ENCODE measurements at regions of chr14 and their contacts with region 1.

Region 1: DNA sequence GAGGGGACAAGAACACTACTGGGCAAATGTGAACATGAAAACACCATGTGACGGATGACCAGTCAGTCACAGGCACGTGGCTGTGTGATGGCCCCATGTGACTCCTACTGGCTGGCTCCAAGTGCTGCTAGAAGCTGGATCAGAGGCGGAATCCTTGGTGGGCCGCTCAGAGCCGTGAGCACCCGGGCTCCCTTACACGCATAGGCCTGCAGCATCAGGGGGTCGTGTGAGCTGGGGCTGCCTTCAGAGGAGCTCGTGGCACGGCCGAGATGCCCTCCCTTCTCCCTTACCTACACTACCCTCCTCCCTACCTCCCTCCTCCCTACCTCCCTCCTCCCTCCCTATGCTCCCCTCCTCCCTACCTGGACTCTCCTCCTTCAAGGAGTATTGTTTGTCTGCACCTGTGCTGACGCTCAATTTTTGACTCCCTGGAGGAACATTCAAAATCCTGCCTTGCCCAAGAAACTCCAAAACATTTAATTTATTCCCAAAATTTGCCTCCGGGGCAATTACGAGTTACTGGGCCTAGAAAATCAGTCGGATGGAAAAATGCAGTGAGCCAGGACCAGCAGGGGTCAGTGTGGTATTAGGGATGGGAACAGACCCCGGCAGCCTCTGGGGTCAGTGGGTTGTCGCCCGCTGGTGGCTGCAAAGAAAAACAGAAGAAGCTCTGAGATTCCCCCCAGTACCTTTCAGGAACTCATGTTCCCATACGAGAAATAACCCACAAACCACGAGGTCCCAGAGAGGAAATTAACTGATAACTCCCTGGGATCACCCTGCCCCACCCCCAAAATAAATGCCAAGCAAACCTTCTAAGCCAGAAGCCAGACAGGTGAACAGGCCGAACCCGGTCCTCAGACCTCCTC is 61.2 kb downstream of the C14orf132 start:
- DNase-seq: peak; percentile 60 to 90 (median 77)
- H3K4me3 ChIP-seq: no peak overlapping the region
- H3K27ac ChIP-seq: peak overlapping the region in 1 of 5 donors; percentile 64
- H3K4me1 ChIP-seq: peaks cover 0 to 5% of the 10 kb centered on the region in 2 donors
- H3K27me3 ChIP-seq: no peaks in the 10 kb centered on the region
- CTCF ChIP-seq: peak; percentile 56 to 88 (median 80)
- POLR2A ChIP-seq: no peak

Region 2: GRCh38 chr14:95922080-95922479 is 178.3 kb before region 1 on chr14:
- intact Hi-C with region 1: no loop called
- DNase-seq: no peak
- H3K4me3 ChIP-seq: no peak overlapping the region
- H3K27ac ChIP-seq: no peak overlapping the region
- H3K4me1 ChIP-seq: no peaks in the 10 kb centered on the region
- H3K27me3 ChIP-seq: no peaks in the 10 kb centered on the region
- CTCF ChIP-seq: no peak
- POLR2A ChIP-seq: no peak

Region 3: GRCh38 chr14:96275177-96276112 is 175.1 kb after region 1 on chr14:
- intact Hi-C with region 1: loop called (anchors 2 to 5 kb)
- DNase-seq: peak; percentile 55 to 85 (median 72)
- H3K4me3 ChIP-seq: no peak overlapping the region
- H3K27ac ChIP-seq: no peak overlapping the region
- H3K4me1 ChIP-seq: peaks cover 0 to 10% of the 10 kb centered on the region in 2 donors
- H3K27me3 ChIP-seq: no peaks in the 10 kb centered on the region
- CTCF ChIP-seq: peak; percentile 75 to 91 (median 84)
- POLR2A ChIP-seq: no peak

Region 4: DNA sequence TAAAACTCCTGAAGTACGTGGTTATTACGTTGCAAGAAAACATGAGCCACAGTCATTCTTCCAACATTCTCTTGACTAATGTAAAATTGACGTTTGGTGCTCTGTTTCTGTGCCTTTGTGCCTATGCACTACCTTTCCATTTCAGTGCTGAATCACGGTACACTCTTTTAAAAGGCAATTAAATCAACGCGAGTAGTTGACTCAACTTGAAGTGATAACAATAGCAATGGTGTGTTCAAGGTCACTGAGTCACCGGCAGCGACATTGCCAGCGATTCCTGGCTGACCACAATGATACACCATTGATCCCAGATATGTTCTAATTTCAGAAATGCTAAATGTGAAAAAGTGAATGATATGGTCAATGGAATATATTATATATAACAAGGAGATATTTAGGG is 309.3 kb after region 1 on chr14:
- intact Hi-C with region 1: loop called in 1 of 2 experiments (anchors 10 kb)
- DNase-seq: peak; percentile 48 to 88 (median 80)
- H3K4me3 ChIP-seq: no peak overlapping the region
- H3K27ac ChIP-seq: peak overlapping the region in 2 of 5 donors; percentile 72 to 77
- H3K4me1 ChIP-seq: peaks cover 0 to 8% of the 10 kb centered on the region in 2 donors
- H3K27me3 ChIP-seq: no peaks in the 10 kb centered on the region
- CTCF ChIP-seq: no peak
- POLR2A ChIP-seq: no peak

Region 5: DNA sequence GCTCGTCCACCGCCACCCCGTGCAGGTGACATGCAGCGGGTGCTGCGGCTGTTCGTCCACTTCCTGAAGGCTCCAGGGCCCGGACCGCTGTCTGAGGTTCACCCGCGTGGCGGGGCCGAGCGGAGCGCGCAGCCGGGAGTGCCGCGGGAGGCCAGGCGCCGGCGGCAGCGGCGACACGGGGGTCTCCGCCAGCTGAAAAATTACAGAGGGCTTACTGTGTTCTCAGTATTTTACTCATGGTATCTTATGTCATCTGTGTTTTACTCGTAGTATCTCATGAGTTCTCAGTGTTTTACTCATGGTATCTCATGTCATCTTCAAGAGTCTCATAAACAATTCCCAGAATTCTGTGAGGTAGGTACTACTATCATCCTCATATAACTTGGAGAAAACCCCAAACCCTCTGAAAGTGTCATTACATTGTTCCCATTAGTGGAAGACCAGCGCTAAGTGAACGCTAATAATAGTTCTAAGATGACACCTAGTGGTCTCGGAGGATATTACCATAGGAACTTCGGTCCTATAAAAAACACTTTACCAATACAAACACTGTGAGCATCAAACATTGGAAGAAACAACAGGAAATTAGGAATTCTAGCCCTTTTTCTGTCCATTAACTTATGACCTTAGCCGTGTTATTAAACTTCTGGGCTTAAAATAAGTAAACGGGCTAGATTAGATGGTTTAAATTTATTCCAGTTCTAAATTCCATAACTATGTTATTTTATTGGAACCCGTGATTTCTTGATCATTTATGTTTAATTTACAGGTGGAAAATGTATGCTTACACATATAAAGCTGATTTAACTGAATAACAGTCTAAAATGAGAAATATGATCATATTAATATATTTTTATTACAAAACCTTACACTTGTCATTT is 324.0 kb after region 1 on chr14:
- intact Hi-C with region 1: loop called (anchors 5 to 10 kb)
- DNase-seq: peak in 6 of 7 donors; percentile 19 to 52 (median 28)
- H3K4me3 ChIP-seq: peak overlapping the region in 1 of 4 donors; percentile 59
- H3K27ac ChIP-seq: no peak overlapping the region
- H3K4me1 ChIP-seq: peaks cover 0 to 4% of the 10 kb centered on the region in 2 donors
- H3K27me3 ChIP-seq: no peaks in the 10 kb centered on the region
- CTCF ChIP-seq: peak; percentile 64 to 91 (median 80)
- POLR2A ChIP-seq: no peak

Measured in adrenal gland (tissue), 19 donors.